ENCODE measurements at regions of chr10 and their contacts with region 1.

Region 1: DNA sequence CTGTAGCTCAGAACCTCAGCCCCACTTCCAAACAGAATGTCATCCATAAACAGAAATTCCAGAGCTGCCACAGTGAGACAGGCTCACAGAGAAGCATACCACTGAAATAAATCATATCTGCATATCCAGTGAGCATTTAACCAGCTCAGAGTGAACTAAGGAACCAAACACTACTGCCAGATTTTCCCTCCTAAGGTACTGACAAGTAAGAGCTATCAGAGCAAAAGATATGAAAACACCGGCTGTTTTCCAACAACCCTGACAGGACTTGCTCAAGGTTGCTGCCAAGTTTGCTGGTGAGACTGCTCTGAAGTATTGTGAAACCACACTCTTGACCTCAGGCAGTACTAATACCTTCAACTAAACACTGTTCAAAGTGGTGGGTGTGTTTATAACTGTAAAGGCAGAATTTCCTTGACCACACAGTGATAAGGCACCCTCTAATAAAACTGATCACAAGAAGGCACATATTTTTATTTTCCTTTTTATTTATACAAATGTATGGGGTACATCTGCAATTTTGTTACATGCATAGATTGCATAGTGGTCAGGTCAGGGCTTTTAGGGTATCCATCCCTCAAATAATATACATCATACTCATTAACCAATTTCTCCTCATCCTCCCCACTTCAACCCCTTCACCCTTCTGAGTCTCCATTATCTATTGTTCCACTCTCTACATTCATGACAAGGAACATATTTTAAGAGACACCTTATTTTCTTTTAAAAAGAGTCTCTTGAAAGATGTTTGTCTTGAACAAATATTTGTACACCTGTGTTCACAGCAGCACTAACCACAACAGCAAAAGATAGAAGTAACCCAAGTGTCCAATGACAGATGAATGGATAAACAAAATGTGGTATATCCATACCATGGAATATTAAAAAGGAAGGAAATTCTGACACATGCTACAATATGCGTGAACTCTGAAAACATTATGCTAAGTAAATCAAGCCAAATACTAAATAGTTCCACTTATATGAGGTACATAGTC is 18.2 kb downstream of the SGMS1 start:
- DNase-seq: peak; percentile 90
- H3K4me3 ChIP-seq: no peak overlapping the region
- H3K27ac ChIP-seq: peak overlapping the region; percentile 47
- H3K27me3 ChIP-seq: no peaks in the 10 kb centered on the region
- CTCF ChIP-seq: no peak

Region 2: DNA sequence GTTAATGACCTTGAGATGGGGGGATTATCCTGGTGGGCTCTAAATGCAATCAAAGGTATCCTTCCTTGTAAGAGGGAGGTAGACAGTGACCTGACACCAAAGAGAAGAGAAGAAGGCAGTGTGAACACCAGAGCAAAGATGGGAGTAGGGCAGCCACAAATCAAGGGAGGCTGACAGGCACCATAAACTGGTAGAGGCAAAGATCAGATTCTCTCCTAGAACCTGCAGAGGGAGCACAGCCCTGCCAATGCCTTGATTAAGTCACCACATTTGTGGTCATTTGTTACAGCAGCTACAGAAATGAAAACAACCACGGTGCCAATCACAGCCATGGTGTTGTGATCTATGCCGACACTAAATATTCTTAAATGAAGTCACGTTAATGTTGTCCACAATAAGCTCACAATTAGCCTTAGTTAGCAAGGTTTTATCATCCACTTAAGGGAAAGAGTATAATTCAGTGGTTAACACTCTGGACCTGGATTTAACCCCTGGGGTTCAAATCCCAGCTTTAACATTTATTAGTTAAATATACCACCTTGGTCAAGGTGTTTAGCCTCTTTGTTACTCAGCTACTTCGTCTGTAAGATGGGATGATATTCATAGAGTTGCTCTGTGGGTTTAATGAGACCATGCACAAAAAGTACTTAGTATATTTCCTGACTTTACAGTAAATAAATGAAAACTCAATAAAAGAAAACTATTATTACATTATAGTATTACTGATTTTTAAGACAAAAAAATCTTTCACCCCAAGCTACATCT is 52.6 kb before region 1 on chr10:
- CTCF ChIA-PET with region 1: no interaction called
- POLR2A ChIA-PET with region 1: interaction called, 12 read pairs
- DNase-seq: no peak
- H3K4me3 ChIP-seq: no peak overlapping the region
- H3K27ac ChIP-seq: peak overlapping the region; percentile 59
- H3K27me3 ChIP-seq: no peaks in the 10 kb centered on the region
- CTCF ChIP-seq: peak; percentile 45

Region 3: GRCh38 chr10:50624866-50625692 is 19.5 kb after region 1 on chr10:
- CTCF ChIA-PET with region 1: interaction called, 3 read pairs
- POLR2A ChIA-PET with region 1: interaction called, 35 read pairs
- DNase-seq: no peak
- H3K4me3 ChIP-seq: peak overlapping the region; percentile 81
- H3K27ac ChIP-seq: peak overlapping the region; percentile 99
- H3K27me3 ChIP-seq: no peaks in the 10 kb centered on the region
- CTCF ChIP-seq: peak; percentile 79

Region 4: GRCh38 chr10:50824782-50825181 is 219.2 kb after region 1 on chr10:
- CTCF ChIA-PET with region 1: no interaction called
- POLR2A ChIA-PET with region 1: no interaction called
- DNase-seq: no peak
- H3K4me3 ChIP-seq: no peak overlapping the region
- H3K27ac ChIP-seq: no peak overlapping the region
- H3K27me3 ChIP-seq: peaks cover 6% of the 10 kb centered on the region
- CTCF ChIP-seq: no peak

Measured in AG04450 (cell line).